Activated T-helper 2 cell treated with anti-CD3 and anti-CD28 coated beads, Interferon-gamma antibody, Interleukin-2, Interleukin-4, amounts not matched to agents 10 μg/mL and 5 μg/mL and 100 μg/mL, durations not matched to agents 14 hours and 24 hours and 36 hours (primary cell): ENCODE measurements at regions of chr12 and their contacts with region 1.

Region 1: DNA sequence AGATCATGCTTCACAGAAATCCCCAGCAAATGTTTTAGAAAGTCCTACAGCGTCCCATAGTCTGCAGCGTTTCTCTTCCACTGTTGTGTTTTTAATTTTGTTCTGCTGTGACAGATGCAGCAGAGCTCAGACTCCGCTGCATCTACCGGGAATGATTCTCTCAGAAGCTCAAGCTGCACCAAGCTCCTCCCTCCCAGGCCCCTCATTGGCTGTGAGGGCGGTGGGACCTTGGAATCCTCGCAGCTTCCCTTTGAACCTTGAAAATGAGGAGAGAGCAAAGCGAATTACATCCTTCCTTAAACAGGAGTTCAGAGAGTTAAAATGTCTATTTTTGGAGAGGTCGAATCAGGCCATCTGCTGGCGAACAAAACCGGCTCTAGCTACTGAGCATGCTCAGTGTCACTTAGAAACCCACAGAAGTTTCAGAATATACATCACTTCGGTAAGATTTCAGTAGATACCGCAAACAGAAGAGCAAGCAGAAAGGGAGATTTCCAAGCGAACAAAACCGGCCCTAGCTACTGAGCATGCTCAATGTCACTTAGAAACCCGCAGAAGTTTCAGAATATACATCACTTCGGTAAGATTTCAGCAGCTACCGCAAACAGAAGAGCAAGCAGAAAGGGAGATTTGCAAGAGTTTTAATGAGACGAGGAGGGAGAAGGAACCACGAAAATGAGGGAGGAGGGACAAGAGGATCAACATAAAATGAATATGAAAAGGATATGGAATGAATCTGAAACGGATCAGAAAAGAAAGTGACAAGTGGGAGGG is at the start of gene ABCD2:
- DNase-seq: peak; percentile 79
- H3K4me3 Mint-ChIP-seq: no peak within 1 kb of the TSS
- H3K27ac Mint-ChIP-seq: no peak within 1 kb of the TSS
- H3K4me1 Mint-ChIP-seq: peaks cover 30% of the 10 kb centered on the region
- H3K27me3 Mint-ChIP-seq: no peaks in the 10 kb centered on the region
- total RNA-seq, gene ABCD2: 5.8 TPM in 2 replicates

Region 2: DNA sequence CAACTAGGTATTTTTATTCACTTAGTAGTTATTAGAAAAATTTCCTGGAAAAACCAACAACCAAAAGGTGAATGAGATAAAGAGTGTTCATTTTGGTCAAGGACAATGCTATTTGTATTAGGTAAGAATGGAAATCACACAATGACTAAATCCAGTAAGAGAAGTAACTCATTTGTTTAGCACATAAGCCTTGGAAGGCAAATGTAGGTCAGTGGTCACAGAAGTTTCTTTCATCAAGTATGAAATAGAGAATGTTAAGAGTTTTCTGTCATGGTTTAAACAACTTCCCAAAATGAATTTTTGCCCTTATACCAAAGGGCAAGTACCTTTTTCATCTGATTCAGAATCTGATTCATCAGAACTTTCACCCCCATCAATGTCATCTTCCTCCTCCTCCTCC is 278.7 kb before region 1 on chr12:
- intact Hi-C with region 1: loop called (anchors 2 kb)
- DNase-seq: no peak
- H3K4me3 Mint-ChIP-seq: no peak overlapping the region
- H3K27ac Mint-ChIP-seq: peak overlapping the region; percentile 48
- H3K4me1 Mint-ChIP-seq: peaks cover 17% of the 10 kb centered on the region
- H3K27me3 Mint-ChIP-seq: no peaks in the 10 kb centered on the region

Region 3: DNA sequence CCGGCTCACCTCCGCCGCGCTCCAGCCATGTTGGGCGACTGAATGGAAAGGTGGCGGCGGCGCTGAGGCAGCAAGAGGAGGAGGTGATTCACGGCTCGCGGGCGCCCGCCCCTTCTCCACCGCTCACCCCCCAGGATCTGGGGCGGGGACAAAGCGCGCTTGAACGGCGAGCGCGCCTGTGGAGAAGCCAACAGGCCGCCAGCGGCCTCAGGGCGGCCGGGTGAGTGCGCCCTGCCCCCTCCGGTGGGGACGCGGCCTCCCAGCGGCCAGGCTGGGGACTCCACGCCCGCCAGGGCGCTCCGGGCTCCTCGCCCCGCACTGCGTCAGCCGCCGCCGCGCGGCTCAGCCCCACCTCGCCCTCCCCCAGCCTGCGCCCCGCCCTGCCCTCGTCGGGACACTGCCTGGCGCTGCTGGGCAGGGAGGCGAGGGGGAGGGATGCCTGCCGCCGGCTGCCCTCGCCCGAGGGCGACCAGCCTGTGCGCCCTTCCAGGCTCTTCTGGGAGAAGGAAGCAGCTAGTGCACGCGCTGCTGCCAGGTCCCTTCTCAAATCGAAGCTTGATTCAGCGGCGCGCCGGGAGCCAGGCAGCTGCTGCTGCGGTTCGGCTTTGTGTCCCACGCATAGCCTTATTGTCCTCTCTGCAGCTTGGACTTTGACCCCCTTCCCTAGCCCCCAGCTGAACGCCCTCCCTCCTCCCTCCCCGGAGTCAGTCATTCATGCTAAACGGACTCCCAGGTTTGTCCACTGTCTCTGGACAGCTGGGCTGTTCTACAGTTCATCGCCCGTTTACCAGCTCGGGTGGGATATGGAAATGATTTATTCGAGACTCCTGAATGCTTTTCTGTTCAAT is 176.5 kb before region 1 on chr12 and contains the start of gene KIF21A:
- intact Hi-C with region 1: loop called (anchors 1 kb)
- DNase-seq: peak; percentile 86
- H3K4me3 Mint-ChIP-seq: peak within 1 kb of the TSS; percentile 90
- H3K27ac Mint-ChIP-seq: peak within 1 kb of the TSS; percentile 81
- H3K4me1 Mint-ChIP-seq: peaks cover 25% of the 10 kb centered on the region
- H3K27me3 Mint-ChIP-seq: peaks cover 13% of the 10 kb centered on the region
- total RNA-seq, gene KIF21A: 35.0 and 35.6 TPM in 2 replicates

Region 4: DNA sequence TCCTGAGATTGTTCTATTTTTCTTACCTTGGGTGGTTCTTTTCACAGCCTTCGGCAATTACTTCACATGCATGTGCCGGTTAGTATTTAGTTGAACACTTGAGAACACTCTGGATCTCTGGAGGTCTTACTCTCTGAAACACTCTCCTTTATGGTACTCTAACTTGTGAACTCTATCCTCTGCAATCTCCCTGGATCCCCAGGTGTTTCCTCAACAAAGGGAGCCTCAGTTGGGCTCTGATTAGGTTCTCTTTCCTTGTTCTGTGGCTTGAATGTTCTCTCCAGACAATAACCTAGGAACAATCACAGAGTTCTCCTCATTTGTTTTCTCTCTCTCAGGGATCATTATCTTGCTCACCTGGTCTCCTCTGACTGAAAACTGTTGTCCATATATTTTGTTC is 40.3 kb after region 1 on chr12:
- intact Hi-C with region 1: loop called (anchors 5 kb)
- DNase-seq: no peak
- H3K4me3 Mint-ChIP-seq: no peak overlapping the region
- H3K27ac Mint-ChIP-seq: no peak overlapping the region
- H3K4me1 Mint-ChIP-seq: peaks cover 10% of the 10 kb centered on the region
- H3K27me3 Mint-ChIP-seq: no peaks in the 10 kb centered on the region

Region 5: GRCh38 chr12:39675263-39675662 is 55.4 kb after region 1 on chr12:
- intact Hi-C with region 1: no loop called
- DNase-seq: no peak
- H3K4me3 Mint-ChIP-seq: no peak overlapping the region
- H3K27ac Mint-ChIP-seq: no peak overlapping the region
- H3K4me1 Mint-ChIP-seq: peaks cover 6% of the 10 kb centered on the region
- H3K27me3 Mint-ChIP-seq: no peaks in the 10 kb centered on the region

Region 6: GRCh38 chr12:39692258-39692853 is 72.5 kb after region 1 on chr12:
- intact Hi-C with region 1: loop called (anchors 1 kb)
- DNase-seq: no peak
- H3K4me3 Mint-ChIP-seq: no peak overlapping the region
- H3K27ac Mint-ChIP-seq: no peak overlapping the region
- H3K4me1 Mint-ChIP-seq: peaks cover 3% of the 10 kb centered on the region
- H3K27me3 Mint-ChIP-seq: peaks cover 6% of the 10 kb centered on the region

Region 7: DNA sequence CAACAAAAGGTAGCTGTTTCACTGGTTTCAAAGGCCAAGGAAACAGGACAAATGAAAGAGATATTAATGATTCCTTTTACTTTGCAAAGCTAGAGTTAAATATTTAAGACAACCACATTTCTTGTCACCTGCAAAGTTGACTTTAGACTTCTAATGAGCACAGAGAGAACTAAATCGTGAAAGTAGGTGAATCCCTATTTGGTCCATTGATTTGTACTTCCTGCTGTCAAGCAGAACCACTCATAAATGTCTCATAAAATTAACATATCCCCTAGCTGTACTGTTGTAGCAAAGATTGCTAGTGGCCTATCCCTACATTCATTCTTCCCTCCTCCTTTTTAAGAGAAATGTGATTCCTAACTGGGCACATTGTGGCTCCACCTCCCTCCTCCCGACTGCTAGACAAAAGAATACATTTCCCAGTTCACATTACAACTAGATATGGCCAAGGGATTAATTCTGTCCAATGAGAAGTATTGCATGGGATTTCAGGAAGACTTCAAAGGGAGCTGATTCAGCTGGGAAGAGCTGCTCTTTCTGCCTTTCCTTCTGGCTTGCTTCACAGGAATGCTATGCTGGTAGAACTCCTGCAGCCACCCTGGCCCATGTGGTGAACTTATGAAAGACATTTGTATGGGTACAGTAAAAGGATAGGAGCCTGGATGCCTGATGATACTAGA is 227.3 kb after region 1 on chr12:
- intact Hi-C with region 1: no loop called
- DNase-seq: no peak
- H3K4me3 Mint-ChIP-seq: no peak overlapping the region
- H3K27ac Mint-ChIP-seq: no peak overlapping the region
- H3K4me1 Mint-ChIP-seq: no peaks in the 10 kb centered on the region
- H3K27me3 Mint-ChIP-seq: no peaks in the 10 kb centered on the region

Region 8: GRCh38 chr12:40146800-40147797 is 527.3 kb after region 1 on chr12:
- intact Hi-C with region 1: loop called (anchors 10 kb)
- DNase-seq: no peak
- H3K4me3 Mint-ChIP-seq: no peak overlapping the region
- H3K27ac Mint-ChIP-seq: no peak overlapping the region
- H3K4me1 Mint-ChIP-seq: no peaks in the 10 kb centered on the region
- H3K27me3 Mint-ChIP-seq: peaks cover 17% of the 10 kb centered on the region